ENCODE measurements at regions of chr11 and their contacts with region 1.

Region 1: DNA sequence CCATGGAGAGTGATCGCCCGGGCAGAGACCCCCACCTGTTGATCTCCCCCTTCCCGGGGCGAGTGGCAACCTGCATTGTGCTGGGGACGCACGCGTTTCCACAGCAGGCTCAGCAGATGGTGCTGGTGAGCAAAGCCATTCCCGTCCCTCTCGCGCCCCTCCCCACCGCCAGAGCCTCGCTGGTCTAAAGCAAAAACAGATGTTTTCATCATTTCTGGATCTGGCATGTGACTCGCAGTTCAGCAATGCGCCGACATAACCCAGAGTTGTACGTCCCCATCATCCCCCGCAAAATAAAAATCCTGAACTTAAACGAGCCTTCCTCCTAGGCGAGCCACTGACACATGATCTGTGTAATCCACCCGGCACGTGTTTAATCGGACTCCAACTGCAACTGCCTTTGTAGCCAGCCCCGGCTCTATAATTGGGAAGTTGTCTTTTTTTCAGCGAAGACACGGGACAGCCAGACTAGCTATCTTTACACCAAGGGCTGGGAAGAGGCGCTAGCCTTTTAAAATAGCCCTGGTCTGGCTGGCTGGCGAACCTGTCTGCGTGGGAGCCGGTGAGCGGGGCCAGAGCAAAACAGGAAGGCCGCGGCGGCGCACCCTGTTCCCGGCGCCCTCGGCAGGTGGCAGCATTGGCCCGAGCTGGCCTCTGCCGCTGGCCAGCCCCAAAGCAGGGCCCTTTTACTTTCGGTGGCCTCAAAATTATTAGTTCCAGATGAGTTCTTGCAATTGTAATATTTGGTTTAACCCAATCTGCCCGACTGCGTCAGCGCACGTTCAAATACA is 203.0 kb upstream of the SORL1-AS1 start:
- DNase-seq: peak; percentile 68
- ATAC-seq: peak; percentile 88
- H3K4me3 Mint-ChIP-seq: peak overlapping the region; percentile 81
- H3K27ac Mint-ChIP-seq: peak overlapping the region; percentile 2
- H3K4me1 Mint-ChIP-seq: peaks cover 9% of the 10 kb centered on the region
- H3K27me3 Mint-ChIP-seq: peaks cover 4% of the 10 kb centered on the region
- CTCF ChIP-seq: peak; percentile 90

Region 2: DNA sequence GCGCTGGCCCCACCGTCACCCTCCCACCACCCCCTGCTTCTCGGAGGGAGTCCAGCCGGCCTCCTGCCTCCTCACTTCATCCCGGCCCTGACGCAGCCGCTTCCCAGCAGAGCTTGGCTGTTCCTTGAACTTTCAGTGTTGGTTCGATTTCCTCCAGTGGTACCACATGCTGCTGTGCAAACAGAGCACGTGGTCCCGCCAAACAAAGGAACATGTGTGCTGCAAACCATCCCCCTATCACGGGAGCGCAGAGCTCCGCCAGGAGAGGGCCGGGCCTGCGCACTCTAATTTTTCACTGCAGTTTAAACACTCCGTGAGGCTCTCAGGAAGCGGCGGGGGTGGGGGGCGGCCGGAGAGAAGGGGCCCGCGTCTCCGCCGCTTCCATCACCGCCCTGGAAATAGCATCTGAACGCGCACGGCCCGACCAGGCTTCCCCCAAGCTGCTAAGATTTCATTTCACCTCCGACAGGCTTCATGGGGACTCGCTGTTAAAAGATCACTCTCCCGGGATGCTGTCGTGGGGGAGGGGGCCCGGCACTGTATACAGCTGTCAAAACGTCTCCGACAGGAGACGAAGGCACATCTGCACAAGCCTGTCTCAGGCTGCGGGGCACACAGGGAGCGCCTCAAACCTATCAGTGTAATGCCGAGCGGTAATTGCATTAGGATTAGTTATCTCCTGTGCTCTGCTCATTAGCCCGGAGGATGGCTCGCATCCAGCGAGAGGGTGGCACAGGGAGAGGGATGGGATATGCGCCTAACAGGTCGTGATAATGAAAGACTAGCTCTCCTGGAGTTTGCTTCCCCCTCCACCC is 66.9 kb after region 1 on chr11:
- CTCF ChIA-PET with region 1: no interaction called
- POLR2A ChIA-PET with region 1: no interaction called
- intact Hi-C with region 1: no loop called
- DNase-seq: no peak
- ATAC-seq: no peak
- H3K4me3 Mint-ChIP-seq: no peak overlapping the region
- H3K27ac Mint-ChIP-seq: no peak overlapping the region
- H3K4me1 Mint-ChIP-seq: no peaks in the 10 kb centered on the region
- H3K27me3 Mint-ChIP-seq: peaks cover 36% of the 10 kb centered on the region
- CTCF ChIP-seq: no peak

Region 3: DNA sequence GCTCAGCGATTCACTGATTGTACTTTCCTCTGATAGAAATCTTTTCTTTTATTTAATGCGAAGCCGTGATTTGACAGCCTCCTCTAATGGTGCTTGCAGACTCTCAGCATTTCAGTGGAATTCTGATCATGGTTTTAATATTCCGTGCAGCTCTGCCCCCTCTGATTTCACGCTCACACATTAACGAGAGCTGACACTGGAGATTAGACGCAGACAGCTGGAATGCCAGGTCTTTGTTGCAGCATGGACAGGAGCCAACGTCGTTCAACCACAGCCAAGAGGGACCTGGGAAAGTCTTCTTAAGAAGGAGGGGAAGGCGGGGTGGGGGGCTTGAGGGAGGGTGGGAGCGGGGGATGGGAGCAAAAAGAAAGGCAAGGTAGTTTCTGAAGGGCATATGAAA is 273.8 kb after region 1 on chr11:
- CTCF ChIA-PET with region 1: no interaction called
- POLR2A ChIA-PET with region 1: no interaction called
- intact Hi-C with region 1: loop called (anchors 1 kb)
- DNase-seq: no peak
- ATAC-seq: no peak
- H3K4me3 Mint-ChIP-seq: no peak overlapping the region
- H3K27ac Mint-ChIP-seq: no peak overlapping the region
- H3K4me1 Mint-ChIP-seq: no peaks in the 10 kb centered on the region
- H3K27me3 Mint-ChIP-seq: peaks cover 10% of the 10 kb centered on the region
- CTCF ChIP-seq: no peak

Region 4: GRCh38 chr11:121965330-121965729 is 309.6 kb after region 1 on chr11:
- CTCF ChIA-PET with region 1: no interaction called
- POLR2A ChIA-PET with region 1: no interaction called
- intact Hi-C with region 1: loop called (anchors 5 kb)
- DNase-seq: no peak
- ATAC-seq: no peak
- H3K4me3 Mint-ChIP-seq: no peak overlapping the region
- H3K27ac Mint-ChIP-seq: no peak overlapping the region
- H3K4me1 Mint-ChIP-seq: no peaks in the 10 kb centered on the region
- H3K27me3 Mint-ChIP-seq: peaks cover 8% of the 10 kb centered on the region
- CTCF ChIP-seq: no peak

Region 5: GRCh38 chr11:122202951-122203456 is 547.3 kb after region 1 on chr11:
- CTCF ChIA-PET with region 1: interaction called, 24 read pairs
- POLR2A ChIA-PET with region 1: no interaction called
- intact Hi-C with region 1: no loop called
- DNase-seq: peak; percentile 21
- ATAC-seq: peak; percentile 65
- H3K4me3 Mint-ChIP-seq: no peak overlapping the region
- H3K27ac Mint-ChIP-seq: no peak overlapping the region
- H3K4me1 Mint-ChIP-seq: no peaks in the 10 kb centered on the region
- H3K27me3 Mint-ChIP-seq: peaks cover 31% of the 10 kb centered on the region
- CTCF ChIP-seq: peak; percentile 55

Region 6: GRCh38 chr11:122578168-122578825 is 922.6 kb after region 1 on chr11:
- CTCF ChIA-PET with region 1: no interaction called
- POLR2A ChIA-PET with region 1: no interaction called
- intact Hi-C with region 1: loop called (anchors 2 kb)
- DNase-seq: no peak
- ATAC-seq: no peak
- H3K4me3 Mint-ChIP-seq: no peak overlapping the region
- H3K27ac Mint-ChIP-seq: no peak overlapping the region
- H3K4me1 Mint-ChIP-seq: peaks cover 10% of the 10 kb centered on the region
- H3K27me3 Mint-ChIP-seq: peaks cover 4% of the 10 kb centered on the region
- CTCF ChIP-seq: no peak

Measured in activated B cell treated with CpG ODN at 0.5 μM for 24 hours (primary cell).